ENCODE measurements at regions of chr11 and their contacts with region 1.

Region 1: GRCh38 chr11:119356349-119357031 is 10.0 kb upstream of the MFRP start:
- DNase-seq: peak; percentile 84
- H3K4me3 Mint-ChIP-seq: peak overlapping the region; percentile 81
- H3K27ac Mint-ChIP-seq: no peak overlapping the region
- H3K4me1 Mint-ChIP-seq: peaks cover 9% of the 10 kb centered on the region
- H3K27me3 Mint-ChIP-seq: peaks cover 22% of the 10 kb centered on the region

Region 2: GRCh38 chr11:119306373-119306890 is 50.1 kb before region 1 on chr11:
- CTCF ChIA-PET with region 1: no interaction called
- intact Hi-C with region 1: no loop called
- DNase-seq: peak; percentile 74
- H3K4me3 Mint-ChIP-seq: peak overlapping the region; percentile 60
- H3K27ac Mint-ChIP-seq: peak overlapping the region; percentile 93
- H3K4me1 Mint-ChIP-seq: peaks cover 32% of the 10 kb centered on the region
- H3K27me3 Mint-ChIP-seq: no peaks in the 10 kb centered on the region

Region 3: GRCh38 chr11:119334174-119334930 is 22.1 kb before region 1 on chr11 and contains the start of gene RNF26:
- CTCF ChIA-PET with region 1: interaction called, 25 read pairs
- intact Hi-C with region 1: no loop called
- DNase-seq: peak; percentile 98
- H3K4me3 Mint-ChIP-seq: peak within 1 kb of the TSS; percentile 93
- H3K27ac Mint-ChIP-seq: peak within 1 kb of the TSS; percentile 91
- H3K4me1 Mint-ChIP-seq: peaks cover 31% of the 10 kb centered on the region
- H3K27me3 Mint-ChIP-seq: peaks cover 5% of the 10 kb centered on the region
- total RNA-seq, gene RNF26: 46.1 to 47.0 TPM

Region 4: GRCh38 chr11:119373921-119374631 is 17.6 kb after region 1 on chr11:
- CTCF ChIA-PET with region 1: interaction called, 132 read pairs
- intact Hi-C with region 1: loop called (anchors 1 kb)
- DNase-seq: peak; percentile 63
- H3K4me3 Mint-ChIP-seq: no peak overlapping the region
- H3K27ac Mint-ChIP-seq: no peak overlapping the region
- H3K4me1 Mint-ChIP-seq: peaks cover 4% of the 10 kb centered on the region
- H3K27me3 Mint-ChIP-seq: peaks cover 14% of the 10 kb centered on the region

Region 5: DNA sequence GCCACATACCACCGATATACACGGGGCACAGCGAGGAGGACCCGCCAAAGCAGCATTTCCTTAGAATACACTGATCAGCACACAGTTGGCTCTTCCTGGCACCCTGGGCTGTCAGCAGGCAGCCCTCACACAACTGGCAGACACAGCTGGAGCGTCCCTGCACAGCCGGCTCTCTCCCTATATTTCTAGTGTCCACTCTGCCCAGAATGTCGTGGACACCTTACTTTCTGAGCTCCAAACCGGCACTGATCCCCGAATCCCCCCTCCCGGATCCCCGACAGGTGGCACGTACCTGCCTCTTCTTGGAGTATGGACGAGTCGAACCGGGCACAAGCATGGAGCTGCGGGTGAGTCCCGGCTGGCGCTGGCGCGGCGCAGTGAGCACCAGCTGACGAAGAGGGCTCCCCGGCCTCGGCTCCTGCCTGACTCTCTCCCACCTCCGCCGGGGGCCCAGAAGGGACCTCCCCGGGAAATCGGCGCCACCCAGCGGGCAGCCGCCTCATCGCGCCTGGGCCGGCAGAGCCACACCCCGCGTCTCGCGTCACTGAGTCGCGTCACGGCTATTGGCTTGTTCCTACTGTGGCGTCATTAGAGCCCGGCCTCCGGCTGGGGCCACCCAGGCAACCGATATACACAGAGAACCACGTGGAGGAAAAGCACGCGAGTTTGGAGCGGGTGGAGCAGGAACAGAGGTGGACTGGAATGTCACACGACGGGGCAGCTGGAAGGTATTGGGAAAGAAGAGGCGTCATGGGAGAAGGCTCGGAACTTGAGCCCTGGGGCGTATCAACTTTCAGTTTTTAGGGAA is 24.9 kb after region 1 on chr11 and contains the start of gene USP2:
- CTCF ChIA-PET with region 1: interaction called, 132 read pairs
- intact Hi-C with region 1: loop called (anchors 1 kb)
- DNase-seq: peak; percentile 97
- H3K4me3 Mint-ChIP-seq: no peak within 1 kb of the TSS
- H3K27ac Mint-ChIP-seq: no peak within 1 kb of the TSS
- H3K4me1 Mint-ChIP-seq: peaks cover 5% of the 10 kb centered on the region
- H3K27me3 Mint-ChIP-seq: no peaks in the 10 kb centered on the region
- total RNA-seq, gene USP2: 0.35 to 0.57 TPM

Region 6: DNA sequence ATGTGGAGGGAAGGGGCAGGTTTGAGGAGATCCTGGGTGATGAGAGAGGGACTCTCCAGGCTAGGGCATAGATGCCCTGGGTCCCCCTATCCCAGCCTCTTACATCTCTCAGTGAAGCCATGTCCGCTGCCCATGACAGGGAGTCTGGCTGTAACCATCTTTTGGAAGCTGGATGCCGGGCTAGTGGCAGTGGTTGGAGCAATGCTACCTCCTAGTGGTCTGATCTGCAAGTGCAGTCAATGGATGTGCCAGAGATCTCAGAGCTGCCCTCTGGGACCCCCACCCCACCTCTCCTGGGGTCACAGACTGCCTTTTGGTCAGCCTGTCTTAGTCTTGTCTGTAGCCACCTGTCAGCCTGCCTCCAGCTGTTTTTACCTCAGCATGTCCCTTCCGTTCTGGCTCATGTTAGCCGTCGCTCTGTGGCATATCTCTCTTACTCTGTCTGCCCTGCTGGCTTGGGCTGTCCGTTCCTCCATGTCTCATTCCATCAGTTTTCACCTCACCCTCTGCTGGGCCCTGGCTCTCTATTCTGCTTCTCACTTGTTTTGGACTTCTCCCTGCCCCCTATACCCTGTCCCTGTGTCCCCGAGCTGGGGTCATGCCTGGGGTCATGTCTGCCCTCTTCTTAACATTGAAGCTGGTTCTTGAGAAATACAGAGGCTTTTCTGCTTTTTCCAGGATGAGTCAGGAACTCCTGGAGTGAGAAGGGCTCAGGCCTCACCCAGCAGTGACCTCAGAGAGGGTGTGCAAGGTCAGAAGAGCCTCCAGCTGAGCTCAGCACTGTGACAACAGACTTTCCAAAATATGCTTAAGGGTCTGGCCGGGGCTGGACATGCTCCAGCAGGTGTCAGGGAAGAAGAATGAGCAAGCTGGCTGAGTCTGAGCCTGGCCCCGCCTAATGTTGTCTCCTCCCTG is 118.4 kb after region 1 on chr11:
- CTCF ChIA-PET with region 1: interaction called, 93 read pairs
- intact Hi-C with region 1: loop called (anchors 1 kb)
- DNase-seq: peak; percentile 79
- H3K4me3 Mint-ChIP-seq: no peak overlapping the region
- H3K27ac Mint-ChIP-seq: no peak overlapping the region
- H3K4me1 Mint-ChIP-seq: no peaks in the 10 kb centered on the region
- H3K27me3 Mint-ChIP-seq: peaks cover 4% of the 10 kb centered on the region

Region 7: GRCh38 chr11:119533921-119534736 is 177.6 kb after region 1 on chr11:
- CTCF ChIA-PET with region 1: interaction called, 9 read pairs
- intact Hi-C with region 1: loop called (anchors 1 kb)
- DNase-seq: peak; percentile 76
- H3K4me3 Mint-ChIP-seq: no peak overlapping the region
- H3K27ac Mint-ChIP-seq: no peak overlapping the region
- H3K4me1 Mint-ChIP-seq: no peaks in the 10 kb centered on the region
- H3K27me3 Mint-ChIP-seq: peaks cover 4% of the 10 kb centered on the region

Region 8: GRCh38 chr11:120197251-120197891 is 840.9 kb after region 1 on chr11:
- CTCF ChIA-PET with region 1: no interaction called
- intact Hi-C with region 1: no loop called
- DNase-seq: no peak
- H3K4me3 Mint-ChIP-seq: no peak overlapping the region
- H3K27ac Mint-ChIP-seq: no peak overlapping the region
- H3K4me1 Mint-ChIP-seq: no peaks in the 10 kb centered on the region
- H3K27me3 Mint-ChIP-seq: peaks cover 2% of the 10 kb centered on the region